Activated CD4-positive, alpha-beta memory T cell treated with anti-CD3 and anti-CD28 coated beads for 36 hours (primary cell): ENCODE measurements at regions of chr3 and their contacts with region 1.

Region 1: GRCh38 chr3:11719406-11720230 is 75.9 kb upstream of the VGLL4 start:
- DNase-seq: peak; percentile 81
- H3K4me3 Mint-ChIP-seq: peak overlapping the region; percentile 83
- H3K27ac Mint-ChIP-seq: no peak overlapping the region
- H3K4me1 Mint-ChIP-seq: peaks cover 18% of the 10 kb centered on the region
- H3K27me3 Mint-ChIP-seq: no peaks in the 10 kb centered on the region

Region 2: GRCh38 chr3:11626084-11626463 is 93.5 kb before region 1 on chr3:
- CTCF ChIA-PET with region 1: no interaction called
- POLR2A ChIA-PET with region 1: no interaction called
- intact Hi-C with region 1: loop called (anchors 5 kb)
- DNase-seq: peak; percentile 38
- H3K4me3 Mint-ChIP-seq: no peak overlapping the region
- H3K27ac Mint-ChIP-seq: peak overlapping the region; percentile 4
- H3K4me1 Mint-ChIP-seq: peaks cover 59% of the 10 kb centered on the region
- H3K27me3 Mint-ChIP-seq: peaks cover 1% of the 10 kb centered on the region

Region 3: GRCh38 chr3:11643605-11644087 is 76.0 kb before region 1 on chr3 and contains the start of gene VGLL4:
- CTCF ChIA-PET with region 1: no interaction called
- POLR2A ChIA-PET with region 1: no interaction called
- intact Hi-C with region 1: loop called (anchors 2 kb)
- DNase-seq: peak; percentile 81
- H3K4me3 Mint-ChIP-seq: peak within 1 kb of the TSS; percentile 96
- H3K27ac Mint-ChIP-seq: peak within 1 kb of the TSS; percentile 97
- H3K4me1 Mint-ChIP-seq: peaks cover 27% of the 10 kb centered on the region
- H3K27me3 Mint-ChIP-seq: no peaks in the 10 kb centered on the region
- total RNA-seq, gene VGLL4: 18.2 to 18.7 TPM

Region 4: GRCh38 chr3:11735638-11736037 is 16.0 kb after region 1 on chr3:
- CTCF ChIA-PET with region 1: no interaction called
- POLR2A ChIA-PET with region 1: no interaction called
- intact Hi-C with region 1: no loop called
- DNase-seq: no peak
- H3K4me3 Mint-ChIP-seq: no peak overlapping the region
- H3K27ac Mint-ChIP-seq: no peak overlapping the region
- H3K4me1 Mint-ChIP-seq: no peaks in the 10 kb centered on the region
- H3K27me3 Mint-ChIP-seq: no peaks in the 10 kb centered on the region

Region 5: GRCh38 chr3:11770477-11771391 is 51.1 kb after region 1 on chr3:
- CTCF ChIA-PET with region 1: no interaction called
- POLR2A ChIA-PET with region 1: interaction called, 5 read pairs
- intact Hi-C with region 1: loop called (anchors 1 kb)
- DNase-seq: peak; percentile 88
- H3K4me3 Mint-ChIP-seq: no peak overlapping the region
- H3K27ac Mint-ChIP-seq: peak overlapping the region; percentile 47
- H3K4me1 Mint-ChIP-seq: peaks cover 20% of the 10 kb centered on the region
- H3K27me3 Mint-ChIP-seq: no peaks in the 10 kb centered on the region

Region 6: DNA sequence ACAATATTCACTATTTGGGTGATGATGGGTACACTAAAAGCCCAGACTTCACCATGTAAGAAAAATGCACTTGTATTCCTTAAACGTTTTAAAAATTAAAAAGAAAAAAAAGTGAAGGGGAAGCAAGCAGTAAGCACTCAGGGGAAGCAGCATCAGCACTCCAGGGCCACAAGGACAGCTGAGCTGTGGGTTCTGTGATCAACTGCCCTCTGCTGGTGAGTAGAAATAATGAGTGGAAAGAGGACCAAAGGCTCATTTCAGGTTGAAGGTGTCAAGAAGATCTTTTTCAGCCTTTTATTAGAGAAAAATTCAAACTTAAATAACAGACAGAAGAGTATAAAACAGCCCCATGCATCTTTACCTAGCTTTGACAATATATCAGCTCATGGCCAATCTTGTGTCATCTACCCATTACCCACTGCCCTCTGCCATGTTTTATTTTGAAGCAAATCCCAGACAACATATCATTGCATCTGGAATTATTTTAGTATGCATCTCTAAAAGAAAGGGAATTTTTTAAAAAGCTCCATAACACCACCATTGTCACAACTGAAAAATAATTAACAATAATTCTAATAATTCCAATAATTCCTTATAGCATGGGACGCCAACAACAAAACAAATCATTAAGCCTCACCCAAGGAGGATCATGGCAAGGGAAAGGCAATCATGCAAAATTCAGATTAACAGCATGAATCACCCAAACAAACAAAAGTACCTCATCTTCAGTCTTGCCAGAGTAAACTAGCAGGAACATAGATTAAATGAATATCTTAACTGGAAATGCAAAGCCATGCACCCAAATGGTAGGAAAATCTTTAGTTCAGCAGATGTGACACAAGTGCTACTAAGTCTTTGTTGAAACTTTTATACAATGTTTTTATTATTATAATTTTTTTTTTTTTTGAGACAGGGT is 84.6 kb after region 1 on chr3:
- CTCF ChIA-PET with region 1: no interaction called
- POLR2A ChIA-PET with region 1: no interaction called
- intact Hi-C with region 1: loop called (anchors 5 kb)
- DNase-seq: peak; percentile 42
- H3K4me3 Mint-ChIP-seq: no peak overlapping the region
- H3K27ac Mint-ChIP-seq: no peak overlapping the region
- H3K4me1 Mint-ChIP-seq: peaks cover 2% of the 10 kb centered on the region
- H3K27me3 Mint-ChIP-seq: no peaks in the 10 kb centered on the region

Region 7: GRCh38 chr3:11846281-11847034 is 126.8 kb after region 1 on chr3 and contains the start of gene TAMM41:
- CTCF ChIA-PET with region 1: no interaction called
- POLR2A ChIA-PET with region 1: no interaction called
- intact Hi-C with region 1: loop called (anchors 2 kb)
- DNase-seq: peak; percentile 95
- H3K4me3 Mint-ChIP-seq: peak within 1 kb of the TSS; percentile 97
- H3K27ac Mint-ChIP-seq: peak within 1 kb of the TSS; percentile 87
- H3K4me1 Mint-ChIP-seq: peaks cover 28% of the 10 kb centered on the region
- H3K27me3 Mint-ChIP-seq: no peaks in the 10 kb centered on the region
- total RNA-seq, gene TAMM41: 25.5 to 25.6 TPM

Region 8: DNA sequence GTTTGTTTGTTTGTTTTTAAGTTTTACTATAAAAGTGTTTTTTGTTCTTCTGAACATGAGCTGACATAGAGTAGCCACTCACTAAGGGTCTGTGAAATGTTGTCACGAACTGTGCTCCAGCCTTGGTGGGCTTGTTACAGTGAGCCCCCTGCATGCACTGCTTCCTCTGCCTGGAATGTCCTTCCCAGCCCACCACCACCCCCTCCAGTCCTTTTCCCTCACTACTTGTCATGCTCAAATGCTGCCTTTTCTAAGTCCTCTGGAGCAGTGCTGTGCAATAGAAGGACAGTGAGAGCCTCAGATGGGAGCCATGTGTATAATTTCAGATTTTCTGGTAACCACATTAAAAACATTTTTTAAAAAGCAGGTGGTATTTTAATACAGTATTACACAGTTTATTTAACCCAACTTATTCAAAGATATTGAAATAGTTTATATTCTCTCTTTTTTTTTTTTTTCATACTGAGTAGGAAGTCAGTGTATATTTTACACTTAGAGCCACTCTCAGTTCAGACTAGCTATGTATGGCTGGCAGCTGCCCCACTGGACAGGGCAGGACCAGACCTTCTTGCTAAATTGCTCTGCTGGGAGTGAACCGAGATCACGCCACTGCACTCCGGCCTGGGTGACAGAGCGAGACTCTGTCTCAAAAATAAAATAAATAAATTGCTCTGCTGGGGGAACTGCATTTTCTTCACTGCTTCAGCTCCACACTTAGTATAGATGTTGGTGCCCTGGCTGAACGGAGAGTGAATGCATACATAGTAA is 798.8 kb after region 1 on chr3:
- CTCF ChIA-PET with region 1: no interaction called
- POLR2A ChIA-PET with region 1: no interaction called
- intact Hi-C with region 1: no loop called
- DNase-seq: no peak
- H3K4me3 Mint-ChIP-seq: no peak overlapping the region
- H3K27ac Mint-ChIP-seq: no peak overlapping the region
- H3K4me1 Mint-ChIP-seq: no peaks in the 10 kb centered on the region
- H3K27me3 Mint-ChIP-seq: no peaks in the 10 kb centered on the region